Dendritic cell treated with granulocyte-macrophage colony-stimulating factor and Interleukin-4, amounts not matched to agents 40 ng/mL and 50 ng/mL, for 4 days (primary cell): ENCODE measurements at regions of chr7 and their contacts with region 1.

Region 1: GRCh38 chr7:100705753-100706671 is at the start of gene POP7:
- H3K4me3 Mint-ChIP-seq: peak within 1 kb of the TSS; percentile 97
- H3K27ac Mint-ChIP-seq: peak within 1 kb of the TSS; percentile 98
- H3K4me1 Mint-ChIP-seq: peaks cover 27% of the 10 kb centered on the region
- H3K27me3 Mint-ChIP-seq: peaks cover 9% of the 10 kb centered on the region

Region 2: DNA sequence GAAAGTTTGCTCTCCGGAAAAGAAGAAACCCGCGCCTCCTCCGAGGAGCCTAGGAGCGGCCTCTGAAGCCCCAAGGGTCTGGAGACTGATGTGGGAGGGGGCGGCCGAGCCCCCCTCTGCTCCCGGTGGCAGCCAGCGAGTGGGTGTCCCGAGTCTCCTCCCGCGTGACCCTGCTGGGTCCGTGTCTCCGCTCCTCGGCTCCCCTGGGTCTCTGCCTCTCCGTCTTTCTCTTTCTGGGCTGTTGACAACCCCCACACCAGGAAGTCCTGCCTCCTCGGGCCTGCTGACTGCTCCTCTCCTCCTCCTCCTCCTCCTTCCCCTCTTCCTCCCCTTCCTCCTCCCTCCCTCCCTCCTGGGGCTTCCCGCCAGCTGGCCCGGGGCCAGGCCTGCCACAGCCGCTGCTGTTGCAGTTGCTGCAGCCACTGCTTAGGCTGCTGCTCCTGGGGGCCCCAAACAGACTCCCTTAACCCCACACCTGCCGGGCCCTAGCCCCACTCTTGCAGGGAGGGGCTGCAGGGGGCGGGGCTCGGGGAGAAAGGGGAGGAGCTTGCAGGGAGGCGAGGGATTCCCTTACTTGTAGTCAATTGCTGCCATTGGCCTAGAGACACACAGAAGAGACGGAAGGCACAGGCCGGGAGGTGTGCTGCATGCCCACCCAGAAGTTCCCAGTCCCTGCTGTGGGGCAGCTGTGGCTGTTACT is 226.9 kb before region 1 on chr7 and contains the start of gene TSC22D4:
- intact Hi-C with region 1: loop called (anchors 10 kb)
- H3K4me3 Mint-ChIP-seq: peak within 1 kb of the TSS; percentile 99
- H3K27ac Mint-ChIP-seq: peak within 1 kb of the TSS; percentile 77
- H3K4me1 Mint-ChIP-seq: peaks cover 47% of the 10 kb centered on the region
- H3K27me3 Mint-ChIP-seq: peaks cover 9% of the 10 kb centered on the region

Region 3: DNA sequence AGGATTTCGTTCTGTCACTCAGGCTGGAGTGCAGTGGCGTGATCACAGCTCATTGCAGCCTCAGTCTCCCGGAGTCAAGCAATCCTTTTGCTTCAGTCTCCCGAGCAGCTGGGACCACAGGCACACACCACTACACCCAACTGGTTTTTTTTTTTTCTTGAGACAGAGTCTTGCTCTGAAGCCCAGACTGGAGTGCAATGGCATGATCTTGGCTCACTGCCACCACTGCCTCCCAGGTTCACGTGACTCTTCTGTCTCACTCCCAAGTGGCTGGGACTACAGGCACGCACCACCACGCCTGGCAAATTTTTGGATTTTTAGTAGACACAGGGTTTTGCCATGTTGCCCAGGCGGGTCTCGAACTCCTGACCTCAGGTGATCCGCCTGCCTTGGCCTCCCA is 43.6 kb before region 1 on chr7:
- intact Hi-C with region 1: no loop called
- H3K4me3 Mint-ChIP-seq: no peak overlapping the region
- H3K27ac Mint-ChIP-seq: no peak overlapping the region
- H3K4me1 Mint-ChIP-seq: peaks cover 3% of the 10 kb centered on the region
- H3K27me3 Mint-ChIP-seq: peaks cover 51% of the 10 kb centered on the region

Region 4: GRCh38 chr7:100726996-100727761 is 21.2 kb after region 1 on chr7:
- intact Hi-C with region 1: loop called (anchors 1 kb)
- H3K4me3 Mint-ChIP-seq: no peak overlapping the region
- H3K27ac Mint-ChIP-seq: no peak overlapping the region
- H3K4me1 Mint-ChIP-seq: peaks cover 12% of the 10 kb centered on the region
- H3K27me3 Mint-ChIP-seq: peaks cover 48% of the 10 kb centered on the region

Region 5: GRCh38 chr7:100773491-100773890 is 67.5 kb after region 1 on chr7:
- intact Hi-C with region 1: no loop called
- H3K4me3 Mint-ChIP-seq: no peak overlapping the region
- H3K27ac Mint-ChIP-seq: no peak overlapping the region
- H3K4me1 Mint-ChIP-seq: no peaks in the 10 kb centered on the region
- H3K27me3 Mint-ChIP-seq: peaks cover 11% of the 10 kb centered on the region

Region 6: GRCh38 chr7:100793806-100794660 is 88.0 kb after region 1 on chr7:
- intact Hi-C with region 1: no loop called
- H3K4me3 Mint-ChIP-seq: no peak overlapping the region
- H3K27ac Mint-ChIP-seq: no peak overlapping the region
- H3K4me1 Mint-ChIP-seq: peaks cover 7% of the 10 kb centered on the region
- H3K27me3 Mint-ChIP-seq: peaks cover 21% of the 10 kb centered on the region

Region 7: DNA sequence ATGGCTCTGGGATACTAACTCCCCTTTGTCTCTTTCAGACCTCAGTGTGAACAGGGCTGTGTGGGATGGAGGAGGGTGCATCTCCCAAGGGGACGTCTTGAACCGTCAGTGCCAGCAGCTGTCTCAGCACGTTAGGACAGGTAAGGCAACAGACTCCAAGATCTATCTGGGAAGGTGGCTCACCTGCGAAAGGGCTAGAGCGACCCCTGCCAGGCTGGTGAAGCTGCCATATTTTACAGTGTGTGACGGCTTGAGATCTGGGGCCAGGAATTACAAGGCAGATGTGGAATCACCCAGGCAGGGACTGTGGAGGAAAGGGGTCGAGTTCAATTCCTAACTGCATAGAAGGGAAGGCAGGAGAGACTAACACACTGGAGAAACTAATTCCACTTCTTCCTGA is 325.1 kb after region 1 on chr7:
- intact Hi-C with region 1: no loop called
- H3K4me3 Mint-ChIP-seq: no peak overlapping the region
- H3K27ac Mint-ChIP-seq: no peak overlapping the region
- H3K4me1 Mint-ChIP-seq: no peaks in the 10 kb centered on the region
- H3K27me3 Mint-ChIP-seq: peaks cover 12% of the 10 kb centered on the region